Naive thymus-derived CD4-positive, alpha-beta T cell (primary cell): ENCODE measurements at regions of chr2 and their contacts with region 1.

Region 1: GRCh38 chr2:74104839-74105238 is 42.9 kb downstream of the BOLA3 start:
- DNase-seq: peak in 3 of 9 donors; percentile 13 to 29 (median 27)
- ATAC-seq: no peak
- H3K4me3 ChIP-seq: no peak overlapping the region
- H3K4me3 Mint-ChIP-seq: no peak overlapping the region
- H3K27ac ChIP-seq: no peak overlapping the region
- H3K27ac Mint-ChIP-seq: peak overlapping the region in 2 of 9 donors; percentile 3 to 67
- H3K4me1 ChIP-seq: no peaks in the 10 kb centered on the region
- H3K4me1 Mint-ChIP-seq: peaks cover 0 to 6% (median 0%) of the 10 kb centered on the region in 7 donors
- H3K27me3 ChIP-seq: no peaks in the 10 kb centered on the region
- H3K27me3 Mint-ChIP-seq: no peaks in the 10 kb centered on the region

Region 2: GRCh38 chr2:73907840-73908452 is 196.9 kb before region 1 on chr2:
- CTCF ChIA-PET with region 1: interaction called, 6 read pairs
- POLR2A ChIA-PET with region 1: no interaction called
- intact Hi-C with region 1: loop called (anchors 1 kb)
- DNase-seq: peak in 8 of 9 donors; percentile 37 to 64 (median 48)
- ATAC-seq: peak; percentile 92
- H3K4me3 ChIP-seq: no peak overlapping the region
- H3K4me3 Mint-ChIP-seq: no peak overlapping the region
- H3K27ac ChIP-seq: no peak overlapping the region
- H3K27ac Mint-ChIP-seq: peak overlapping the region in 4 of 9 donors; percentile 19 to 61 (median 40)
- H3K4me1 ChIP-seq: no peaks in the 10 kb centered on the region
- H3K4me1 Mint-ChIP-seq: peaks cover 0 to 3% (median 0%) of the 10 kb centered on the region in 7 donors
- H3K27me3 ChIP-seq: no peaks in the 10 kb centered on the region
- H3K27me3 Mint-ChIP-seq: no peaks in the 10 kb centered on the region